Activated CD4-positive, alpha-beta memory T cell treated with anti-CD3 and anti-CD28 coated beads, Interleukin-2, amount 10 ng/mL, durations not matched to agents 7 days and 5 days (primary cell): ENCODE measurements at regions of chr13 and their contacts with region 1.

Region 1: GRCh38 chr13:114143806-114144605 is 11.6 kb upstream of the RASA3 start:
- DNase-seq: peak; percentile 47
- H3K4me3 Mint-ChIP-seq: no peak overlapping the region
- H3K27ac Mint-ChIP-seq: peak overlapping the region; percentile 45
- H3K4me1 Mint-ChIP-seq: peaks cover 41% of the 10 kb centered on the region
- H3K27me3 Mint-ChIP-seq: no peaks in the 10 kb centered on the region

Region 2: GRCh38 chr13:114065141-114065925 is 78.7 kb before region 1 on chr13:
- CTCF ChIA-PET with region 1: interaction called, 5 read pairs
- POLR2A ChIA-PET with region 1: interaction called, 10 read pairs
- DNase-seq: peak; percentile 81
- H3K4me3 Mint-ChIP-seq: peak overlapping the region; percentile 67
- H3K27ac Mint-ChIP-seq: peak overlapping the region; percentile 89
- H3K4me1 Mint-ChIP-seq: peaks cover 60% of the 10 kb centered on the region
- H3K27me3 Mint-ChIP-seq: no peaks in the 10 kb centered on the region

Region 3: DNA sequence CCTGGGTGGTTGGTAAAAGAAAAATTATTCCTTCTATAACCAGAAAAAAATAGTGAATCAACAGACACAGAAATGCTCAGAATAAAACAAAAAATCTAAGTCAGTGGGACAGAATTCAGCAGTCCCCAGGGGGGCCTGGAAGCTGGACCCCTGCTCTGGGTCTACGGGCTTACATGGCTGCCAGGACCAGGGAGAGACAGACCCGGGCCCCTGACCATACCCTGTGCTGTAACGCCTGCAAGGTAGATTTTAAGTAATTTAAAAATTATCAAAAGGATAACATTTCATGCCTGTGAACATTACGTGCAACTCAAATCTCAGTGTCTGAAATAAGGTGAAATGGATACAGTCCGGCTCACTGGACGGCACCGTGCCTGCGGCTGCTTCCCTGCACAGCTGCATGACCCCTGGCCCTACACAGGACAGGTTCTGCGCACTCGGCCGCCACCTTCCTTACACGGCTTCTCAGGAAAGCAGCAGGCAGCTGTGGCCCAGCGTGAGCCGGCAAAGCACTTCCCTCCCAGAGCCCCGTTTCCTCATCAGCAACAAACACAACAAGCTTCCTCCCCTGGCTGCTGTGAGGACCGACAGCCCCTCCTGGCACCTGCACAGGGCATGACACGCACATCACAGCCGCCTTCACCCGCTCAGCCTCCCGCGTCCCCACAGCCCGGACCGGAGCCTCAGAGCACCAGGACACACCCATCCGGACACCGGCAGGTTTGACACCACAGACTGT is 33.7 kb before region 1 on chr13:
- CTCF ChIA-PET with region 1: interaction called, 16 read pairs
- POLR2A ChIA-PET with region 1: interaction called, 9 read pairs
- DNase-seq: peak; percentile 88
- H3K4me3 Mint-ChIP-seq: peak overlapping the region; percentile 75
- H3K27ac Mint-ChIP-seq: peak overlapping the region; percentile 95
- H3K4me1 Mint-ChIP-seq: peaks cover 63% of the 10 kb centered on the region
- H3K27me3 Mint-ChIP-seq: no peaks in the 10 kb centered on the region

Region 4: DNA sequence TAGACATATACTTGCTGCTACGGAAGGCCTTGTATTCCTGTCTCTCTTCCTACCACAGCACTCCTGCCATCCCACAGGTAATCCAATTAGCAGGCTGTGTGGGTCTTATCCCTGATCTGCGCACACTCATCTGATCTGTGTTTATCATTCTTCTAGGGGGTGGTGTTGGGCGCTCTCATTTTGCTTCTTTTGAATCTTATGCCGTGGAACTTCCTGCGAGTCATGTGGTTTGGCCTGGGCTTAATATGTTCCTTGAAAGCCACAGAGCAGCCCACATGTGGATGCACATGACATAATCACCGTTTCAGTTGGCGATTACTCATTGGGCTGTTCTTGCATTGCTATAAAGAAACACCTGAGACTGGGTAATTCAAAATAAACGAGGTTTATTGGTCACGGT is 19.1 kb before region 1 on chr13:
- CTCF ChIA-PET with region 1: interaction called, 10 read pairs
- POLR2A ChIA-PET with region 1: interaction called, 166 read pairs
- DNase-seq: peak; percentile 79
- H3K4me3 Mint-ChIP-seq: no peak overlapping the region
- H3K27ac Mint-ChIP-seq: peak overlapping the region; percentile 79
- H3K4me1 Mint-ChIP-seq: peaks cover 73% of the 10 kb centered on the region
- H3K27me3 Mint-ChIP-seq: no peaks in the 10 kb centered on the region

Region 5: DNA sequence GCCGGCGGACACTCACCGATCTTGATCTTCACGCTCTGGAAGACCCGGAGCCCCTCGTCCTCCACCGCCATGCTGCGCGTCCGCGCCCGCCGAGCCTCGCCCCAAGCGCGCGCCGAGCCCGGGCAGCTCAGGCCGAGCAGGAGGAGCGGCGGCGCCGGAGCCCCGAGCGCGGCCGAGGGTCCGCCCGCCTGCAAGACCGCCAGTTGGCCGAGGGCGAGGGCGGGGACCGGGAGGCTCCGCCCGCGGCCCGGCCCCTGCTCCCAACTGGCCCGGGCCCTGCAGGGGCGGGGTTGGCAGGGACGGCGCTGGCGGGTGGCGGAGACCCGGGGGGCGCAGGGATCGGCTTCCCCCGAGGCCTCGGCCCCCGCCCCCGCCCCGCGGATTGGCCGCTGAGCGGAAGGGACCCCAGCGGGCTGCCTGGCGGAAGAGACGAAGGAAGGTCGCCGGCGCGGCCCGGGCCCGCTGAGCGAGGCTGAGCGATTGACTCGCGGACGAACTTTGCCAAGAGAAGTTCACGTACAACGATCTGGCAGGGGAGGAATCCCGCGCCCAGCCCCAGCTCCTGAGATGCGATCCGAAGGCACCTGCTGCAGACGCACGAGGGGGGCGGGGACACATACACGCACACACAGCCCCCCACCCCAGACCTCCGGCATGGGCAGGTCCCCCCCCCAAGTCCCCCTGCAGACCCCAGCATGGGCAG is 11.4 kb before region 1 on chr13 and contains the start of gene RASA3:
- CTCF ChIA-PET with region 1: interaction called, 10 read pairs
- POLR2A ChIA-PET with region 1: interaction called, 166 read pairs
- DNase-seq: peak; percentile 67
- H3K4me3 Mint-ChIP-seq: peak within 1 kb of the TSS; percentile 97
- H3K27ac Mint-ChIP-seq: peak within 1 kb of the TSS; percentile 92
- H3K4me1 Mint-ChIP-seq: peaks cover 60% of the 10 kb centered on the region
- H3K27me3 Mint-ChIP-seq: peaks cover 10% of the 10 kb centered on the region
- total RNA-seq, gene RASA3: 97.2 to 99.3 TPM

Region 6: DNA sequence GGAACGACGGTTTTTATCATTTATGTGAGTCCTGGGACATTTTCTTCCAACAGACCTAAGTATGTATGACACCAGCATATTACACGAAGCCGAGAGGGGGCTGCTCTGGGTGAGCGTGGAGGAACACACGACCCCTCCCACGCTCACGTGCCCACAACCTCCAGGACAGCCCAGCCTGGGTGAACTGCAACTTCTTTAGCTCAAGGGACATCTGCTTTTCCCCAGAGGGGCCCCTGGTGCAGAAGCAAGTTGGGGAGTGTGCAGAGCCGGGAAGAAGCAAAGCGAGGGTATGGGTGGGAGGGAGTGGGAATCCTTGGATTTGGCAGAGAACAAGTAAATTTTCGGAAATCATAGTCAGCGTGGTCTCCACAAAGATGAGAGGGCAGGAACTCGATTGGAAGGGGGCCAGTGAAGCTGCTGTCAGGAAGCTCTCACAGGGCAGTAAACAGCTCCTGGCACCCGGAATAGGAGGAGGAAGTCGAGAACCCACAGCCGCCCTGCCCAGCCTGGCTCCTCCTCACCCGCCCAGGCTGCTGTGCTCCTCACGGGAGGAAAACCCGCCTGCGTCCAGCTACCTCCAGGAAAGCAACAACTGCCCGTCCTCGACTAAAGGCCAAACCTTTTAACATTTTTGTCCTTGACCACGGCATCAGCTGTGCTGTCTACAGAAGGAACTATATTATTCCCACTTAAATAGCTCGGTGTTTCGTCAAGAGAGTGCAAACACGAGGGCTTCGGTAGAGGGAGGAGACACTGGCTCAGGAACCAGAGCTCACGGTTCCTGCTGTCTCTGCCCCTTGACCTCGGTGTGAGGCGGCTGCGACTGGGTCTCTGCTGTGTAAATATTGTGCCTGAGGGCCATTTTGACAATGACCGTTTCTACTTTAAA is 17.9 kb after region 1 on chr13:
- CTCF ChIA-PET with region 1: interaction called, 7 read pairs
- POLR2A ChIA-PET with region 1: interaction called, 28 read pairs
- DNase-seq: peak; percentile 43
- H3K4me3 Mint-ChIP-seq: peak overlapping the region; percentile 53
- H3K27ac Mint-ChIP-seq: peak overlapping the region; percentile 76
- H3K4me1 Mint-ChIP-seq: peaks cover 59% of the 10 kb centered on the region
- H3K27me3 Mint-ChIP-seq: peaks cover 32% of the 10 kb centered on the region